A673 (cell line): ENCODE measurements at regions of chr11 and their contacts with region 1.

Region 1: GRCh38 chr11:65888163-65888814 is at the start of gene FIBP:
- DNase-seq: peak; percentile 100
- H3K4me3 ChIP-seq: peak within 1 kb of the TSS; percentile 72
- H3K27ac ChIP-seq: peak within 1 kb of the TSS; percentile 85
- H3K4me1 ChIP-seq: peaks cover 39% of the 10 kb centered on the region
- H3K27me3 ChIP-seq: no peaks in the 10 kb centered on the region
- CTCF ChIP-seq: peak; percentile 97
- total RNA-seq, gene FIBP: 98.5 and 116 TPM in 2 replicates

Region 2: DNA sequence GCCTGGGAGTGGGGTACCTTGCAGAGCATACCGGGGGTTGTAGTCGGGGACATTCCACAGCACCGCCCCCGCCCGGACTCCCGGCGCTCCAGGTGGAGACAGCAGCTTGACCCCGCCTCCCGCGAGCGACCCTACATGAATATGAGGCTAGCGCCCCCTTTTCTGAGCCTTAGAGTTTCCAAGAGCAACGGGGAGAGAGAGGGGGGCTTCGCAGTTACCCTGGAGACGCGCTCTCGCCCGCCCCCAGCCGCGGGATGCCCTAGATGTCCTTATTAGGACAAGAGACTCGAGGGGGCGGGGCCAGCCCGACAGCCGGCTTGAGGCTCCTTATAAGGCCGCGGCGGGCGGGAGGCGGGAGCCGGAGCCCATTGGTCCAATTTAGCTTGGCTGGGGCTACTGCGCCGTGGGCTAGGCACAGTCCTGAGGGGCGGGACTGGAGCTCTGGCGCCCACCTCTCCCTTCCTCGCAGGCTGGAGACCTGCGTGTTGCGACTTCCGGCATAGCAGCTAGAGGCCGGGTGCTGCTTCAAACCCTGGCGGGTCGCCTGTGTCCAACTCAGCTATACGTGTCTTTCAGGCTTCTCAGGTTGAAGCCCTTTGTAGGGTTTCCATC is 29.0 kb before region 1 on chr11:
- CTCF ChIA-PET with region 1: interaction called, 65 read pairs
- POLR2A ChIA-PET with region 1: interaction called, 8 read pairs
- intact Hi-C with region 1: loop called (anchors 1 kb)
- DNase-seq: peak; percentile 100
- H3K4me3 ChIP-seq: peak overlapping the region; percentile 95
- H3K27ac ChIP-seq: peak overlapping the region; percentile 99
- H3K4me1 ChIP-seq: peaks cover 25% of the 10 kb centered on the region
- H3K27me3 ChIP-seq: no peaks in the 10 kb centered on the region
- CTCF ChIP-seq: peak; percentile 44; the same call in 1 of the 2 replicates

Region 3: GRCh38 chr11:65873318-65874156 is 14.8 kb before region 1 on chr11:
- CTCF ChIA-PET with region 1: interaction called, 16 read pairs
- POLR2A ChIA-PET with region 1: interaction called, 21 read pairs
- intact Hi-C with region 1: no loop called
- DNase-seq: peak; percentile 95
- H3K4me3 ChIP-seq: peak overlapping the region; percentile 68
- H3K27ac ChIP-seq: peak overlapping the region; percentile 75
- H3K4me1 ChIP-seq: peaks cover 18% of the 10 kb centered on the region
- H3K27me3 ChIP-seq: no peaks in the 10 kb centered on the region
- CTCF ChIP-seq: no peak

Region 4: GRCh38 chr11:65911682-65912568 is 23.6 kb after region 1 on chr11:
- CTCF ChIA-PET with region 1: interaction called, 31 read pairs
- POLR2A ChIA-PET with region 1: no interaction called
- intact Hi-C with region 1: no loop called
- DNase-seq: peak; percentile 90
- H3K4me3 ChIP-seq: no peak overlapping the region
- H3K27ac ChIP-seq: peak overlapping the region; percentile 53
- H3K4me1 ChIP-seq: peaks cover 34% of the 10 kb centered on the region
- H3K27me3 ChIP-seq: no peaks in the 10 kb centered on the region
- CTCF ChIP-seq: peak; percentile 63

Region 5: DNA sequence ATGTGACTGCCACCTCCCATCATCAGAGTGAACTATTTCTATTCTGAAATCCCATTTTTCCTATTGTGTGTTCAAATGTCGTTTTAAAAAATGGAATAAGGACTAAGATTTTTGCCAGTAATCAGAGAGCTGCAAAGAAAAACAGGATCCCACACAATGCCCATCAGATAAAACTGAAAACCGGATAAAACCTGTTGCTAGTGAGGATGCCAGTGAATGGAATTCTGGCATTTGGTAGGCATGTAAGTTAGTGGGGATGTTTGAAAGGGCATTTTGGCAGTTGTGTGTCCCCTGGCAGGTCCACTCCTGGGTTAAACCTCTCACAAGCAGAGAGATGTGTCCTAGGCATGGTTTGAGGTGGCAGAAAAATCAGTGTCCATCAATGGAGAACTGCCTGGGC is 37.1 kb after region 1 on chr11:
- CTCF ChIA-PET with region 1: no interaction called
- POLR2A ChIA-PET with region 1: no interaction called
- intact Hi-C with region 1: no loop called
- DNase-seq: no peak
- H3K4me3 ChIP-seq: no peak overlapping the region
- H3K27ac ChIP-seq: no peak overlapping the region
- H3K4me1 ChIP-seq: no peaks in the 10 kb centered on the region
- H3K27me3 ChIP-seq: no peaks in the 10 kb centered on the region
- CTCF ChIP-seq: no peak

Region 6: GRCh38 chr11:65988791-65989592 is 100.7 kb after region 1 on chr11:
- CTCF ChIA-PET with region 1: interaction called, 13 read pairs
- POLR2A ChIA-PET with region 1: no interaction called
- intact Hi-C with region 1: loop called (anchors 1 kb)
- DNase-seq: peak; percentile 97
- H3K4me3 ChIP-seq: no peak overlapping the region
- H3K27ac ChIP-seq: no peak overlapping the region
- H3K4me1 ChIP-seq: no peaks in the 10 kb centered on the region
- H3K27me3 ChIP-seq: no peaks in the 10 kb centered on the region
- CTCF ChIP-seq: peak; percentile 100